ENCODE measurements at regions of chr3 and their contacts with region 1.

Region 1: DNA sequence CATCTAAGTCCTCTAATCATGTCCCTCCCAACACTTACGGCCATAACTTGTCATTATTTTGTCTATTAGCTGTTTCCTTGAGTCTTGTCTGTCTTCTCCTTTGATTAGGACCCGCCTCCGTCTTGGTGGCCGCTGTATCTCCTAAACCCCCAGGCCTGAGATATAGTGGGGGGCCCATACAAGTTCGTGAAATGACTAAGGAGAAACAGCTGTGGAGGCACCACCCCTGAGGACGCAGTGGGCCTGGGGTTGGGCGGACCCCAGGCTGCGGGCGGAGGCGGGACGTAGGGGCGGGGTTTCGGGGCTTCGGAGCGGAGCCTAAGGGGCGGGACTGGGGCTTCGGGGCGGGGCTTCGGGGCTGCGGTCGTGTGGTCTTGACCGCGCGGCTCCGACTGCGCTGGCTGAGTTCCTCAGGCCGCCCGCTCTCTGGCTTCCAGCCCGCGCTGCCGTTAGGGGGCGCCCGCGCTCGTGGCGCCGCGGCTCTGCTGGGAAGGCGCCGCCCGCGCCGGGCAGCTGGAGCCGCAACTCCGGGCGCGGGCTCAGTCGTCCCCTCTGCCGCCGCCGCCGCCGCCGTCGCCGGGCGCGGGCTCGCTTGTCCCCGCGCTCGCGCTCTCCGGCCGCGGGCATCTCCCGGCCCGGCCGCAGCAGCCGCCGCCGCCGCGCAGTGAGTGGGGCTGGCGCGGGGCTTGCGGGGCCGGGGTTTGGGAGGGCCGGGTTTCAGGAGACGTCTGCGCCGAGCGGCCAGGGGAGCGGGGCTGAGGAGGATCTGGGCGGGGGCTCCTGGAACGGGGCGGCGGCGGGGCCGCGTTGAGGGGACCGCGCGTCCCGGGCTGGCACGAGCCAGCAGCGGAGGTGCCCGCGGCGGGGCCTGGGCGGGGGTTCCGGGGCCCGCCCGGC is at the start of gene KCTD6:
- DNase-seq: peak; percentile 94 to 97 (median 97)
- H3K4me3 ChIP-seq: peak within 1 kb of the TSS; percentile 65 to 95 (median 83)
- H3K27ac ChIP-seq: peak within 1 kb of the TSS in 1 of 2 experiments; percentile 59
- H3K4me1 ChIP-seq: peaks cover 6 to 22% (median 14%) of the 10 kb centered on the region in 4 experiments
- H3K27me3 ChIP-seq: peaks cover 0 to 2% (median 0%) of the 10 kb centered on the region in 5 experiments

Region 2: DNA sequence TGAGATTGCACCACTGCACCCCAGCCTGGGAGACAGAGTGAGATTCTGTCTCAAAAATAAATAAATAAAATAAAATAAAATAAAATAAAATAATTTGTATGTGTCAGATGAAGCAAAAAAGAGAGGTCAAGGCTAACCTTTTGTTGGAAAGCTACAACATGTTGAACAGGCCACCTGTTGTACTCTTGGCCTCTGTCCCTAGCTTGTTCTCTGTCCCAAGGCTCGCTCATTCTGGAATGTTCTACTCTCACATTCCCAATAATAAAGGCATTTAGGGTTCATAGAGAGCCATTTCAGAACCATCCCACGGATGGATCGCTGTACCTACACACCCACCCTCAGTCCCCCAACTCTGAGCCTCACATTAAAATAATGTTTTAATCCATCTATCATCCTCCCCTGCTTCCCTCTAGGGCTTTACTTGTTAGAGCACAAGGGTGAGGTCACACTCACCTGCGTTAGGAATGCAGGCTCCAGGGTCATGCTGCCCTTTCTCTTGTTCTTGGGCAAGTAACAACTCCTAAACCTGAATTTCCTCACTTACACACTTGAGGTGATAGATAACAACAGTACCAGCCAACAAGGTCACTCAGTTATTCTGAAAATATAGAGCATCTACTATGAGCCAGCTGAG is 24.7 kb before region 1 on chr3:
- CTCF ChIA-PET with region 1: interaction called, 12 read pairs
- POLR2A ChIA-PET with region 1: no interaction called
- DNase-seq: no peak
- H3K4me3 ChIP-seq: no peak overlapping the region
- H3K27ac ChIP-seq: no peak overlapping the region
- H3K4me1 ChIP-seq: peaks cover 6 to 25% (median 21%) of the 10 kb centered on the region in 4 experiments
- H3K27me3 ChIP-seq: no peaks in the 10 kb centered on the region

Region 3: DNA sequence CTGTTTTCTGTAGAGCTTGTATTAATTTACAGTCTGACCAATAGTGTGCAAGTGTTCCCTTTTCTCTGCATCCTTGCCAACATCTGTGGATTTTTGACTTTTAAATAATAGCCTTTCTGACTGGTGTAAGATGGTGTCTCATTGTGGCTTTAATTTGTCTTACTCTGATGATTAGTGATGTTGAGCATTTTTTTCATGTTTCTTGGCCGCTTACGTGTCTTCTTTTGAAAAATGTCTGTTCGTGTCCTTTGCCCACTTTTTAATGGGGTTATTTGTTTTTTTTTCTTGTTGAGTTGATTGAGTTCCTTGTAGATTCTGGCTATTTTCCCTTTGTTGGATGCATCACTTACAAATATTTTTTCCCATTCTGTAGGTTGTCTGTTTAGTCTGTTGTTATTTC is 52.8 kb after region 1 on chr3:
- CTCF ChIA-PET with region 1: no interaction called
- POLR2A ChIA-PET with region 1: no interaction called
- DNase-seq: no peak
- H3K4me3 ChIP-seq: no peak overlapping the region
- H3K27ac ChIP-seq: no peak overlapping the region
- H3K4me1 ChIP-seq: peaks cover 0 to 5% (median 0%) of the 10 kb centered on the region in 4 experiments
- H3K27me3 ChIP-seq: no peaks in the 10 kb centered on the region

Measured in common myeloid progenitor, CD34-positive (primary cell).